ENCODE measurements at regions of chr16 and their contacts with region 1.

Region 1: DNA sequence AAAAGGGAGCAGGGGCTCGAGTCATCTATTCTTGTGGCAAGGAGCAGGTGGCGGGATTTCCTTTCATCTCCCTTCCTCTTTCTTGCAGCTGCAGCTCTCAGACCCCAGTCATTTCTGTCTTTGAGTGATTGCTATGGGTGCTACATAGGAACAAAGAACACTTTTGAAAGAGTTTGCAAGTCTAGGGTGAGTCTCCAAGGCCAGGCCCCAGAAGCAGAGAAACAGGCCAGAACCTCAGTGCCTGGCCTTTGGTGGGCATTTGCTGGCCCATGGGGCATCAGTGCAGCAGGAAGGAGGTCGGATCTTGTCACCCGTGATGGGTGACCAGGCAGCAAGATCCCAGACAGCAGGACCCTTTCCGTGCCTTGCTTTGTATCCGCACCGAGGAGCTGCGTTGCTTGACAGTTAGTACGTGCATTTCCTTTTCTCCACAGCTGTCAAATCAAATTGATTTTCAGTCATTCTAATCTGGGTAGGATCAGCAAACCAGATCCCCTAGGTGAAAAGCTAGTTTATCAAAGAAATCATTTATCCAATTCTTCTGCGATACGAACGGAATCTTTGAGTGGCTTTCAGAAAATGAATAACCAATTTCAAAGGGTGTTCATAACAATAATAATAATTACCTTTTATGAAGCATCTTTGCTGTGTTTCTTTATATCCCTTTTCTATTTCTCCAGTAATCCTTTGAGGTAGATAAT is 244.6 kb upstream of the MAF start:
- DNase-seq: no peak
- ATAC-seq: peak; percentile 10; the same call in 2 of the 3 replicates
- H3K4me3 ChIP-seq: peak overlapping the region; percentile 39
- H3K27ac ChIP-seq: peak overlapping the region; percentile 75
- H3K4me1 ChIP-seq: peaks cover 16 to 37% of the 10 kb centered on the region in 2 experiments; a peak in 4 of 5 replicates
- H3K27me3 ChIP-seq: no peaks in the 10 kb centered on the region
- CTCF ChIP-seq: no peak
- EP300 ChIP-seq: no peak
- POLR2A ChIP-seq: no peak
- RAD21 ChIP-seq: no peak; a peak in 1 of 4 replicates

Region 2: DNA sequence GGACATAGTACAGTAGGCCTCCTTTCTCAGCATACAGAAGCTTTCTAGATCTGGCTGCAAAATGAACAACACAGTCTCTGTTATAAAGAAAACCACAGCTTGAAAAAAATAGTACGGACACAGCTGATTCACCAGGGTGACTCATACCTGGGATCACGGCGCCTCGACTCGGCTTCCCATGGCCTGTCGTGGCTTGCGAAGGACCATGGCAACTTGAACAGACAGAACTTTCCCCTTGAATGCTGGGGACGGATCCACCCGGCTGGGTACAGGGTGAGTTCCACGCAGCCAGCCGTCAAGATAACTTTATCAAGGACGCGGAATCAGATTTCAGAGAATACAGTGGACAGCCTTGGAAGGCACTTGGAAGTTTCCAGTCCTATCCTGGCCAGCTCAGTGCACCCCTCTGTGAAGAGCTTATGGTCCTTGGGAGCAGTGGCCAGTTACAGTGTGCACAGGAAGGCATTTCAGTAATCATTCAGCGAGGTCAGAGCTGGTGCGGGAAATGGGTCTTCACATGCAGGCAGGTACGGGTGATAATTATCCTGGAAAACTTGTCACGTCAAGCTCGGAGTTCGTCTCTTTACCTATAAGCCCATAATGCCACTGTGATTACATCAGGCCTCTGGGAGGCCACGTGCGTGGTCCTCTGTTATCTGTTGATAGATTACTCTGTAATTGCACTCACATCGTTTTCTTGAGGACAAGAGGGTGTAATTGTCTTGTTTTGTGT is 186.7 kb before region 1 on chr16:
- CTCF ChIA-PET with region 1: no interaction called
- POLR2A ChIA-PET with region 1: no interaction called
- in situ Hi-C with region 1: no loop called
- intact Hi-C with region 1: no loop called
- DNase-seq: peak in 2 of 4 experiments; percentile 25 to 50
- ATAC-seq: peak; percentile 63
- H3K4me3 ChIP-seq: no peak overlapping the region
- H3K27ac ChIP-seq: no peak overlapping the region
- H3K4me1 ChIP-seq: peaks cover 0 to 3% of the 10 kb centered on the region in 2 experiments; a peak in 2 of 5 replicates
- H3K27me3 ChIP-seq: peaks cover 16 to 31% of the 10 kb centered on the region in 2 experiments
- CTCF ChIP-seq: no peak
- EP300 ChIP-seq: no peak
- POLR2A ChIP-seq: no peak
- RAD21 ChIP-seq: no peak

Region 3: DNA sequence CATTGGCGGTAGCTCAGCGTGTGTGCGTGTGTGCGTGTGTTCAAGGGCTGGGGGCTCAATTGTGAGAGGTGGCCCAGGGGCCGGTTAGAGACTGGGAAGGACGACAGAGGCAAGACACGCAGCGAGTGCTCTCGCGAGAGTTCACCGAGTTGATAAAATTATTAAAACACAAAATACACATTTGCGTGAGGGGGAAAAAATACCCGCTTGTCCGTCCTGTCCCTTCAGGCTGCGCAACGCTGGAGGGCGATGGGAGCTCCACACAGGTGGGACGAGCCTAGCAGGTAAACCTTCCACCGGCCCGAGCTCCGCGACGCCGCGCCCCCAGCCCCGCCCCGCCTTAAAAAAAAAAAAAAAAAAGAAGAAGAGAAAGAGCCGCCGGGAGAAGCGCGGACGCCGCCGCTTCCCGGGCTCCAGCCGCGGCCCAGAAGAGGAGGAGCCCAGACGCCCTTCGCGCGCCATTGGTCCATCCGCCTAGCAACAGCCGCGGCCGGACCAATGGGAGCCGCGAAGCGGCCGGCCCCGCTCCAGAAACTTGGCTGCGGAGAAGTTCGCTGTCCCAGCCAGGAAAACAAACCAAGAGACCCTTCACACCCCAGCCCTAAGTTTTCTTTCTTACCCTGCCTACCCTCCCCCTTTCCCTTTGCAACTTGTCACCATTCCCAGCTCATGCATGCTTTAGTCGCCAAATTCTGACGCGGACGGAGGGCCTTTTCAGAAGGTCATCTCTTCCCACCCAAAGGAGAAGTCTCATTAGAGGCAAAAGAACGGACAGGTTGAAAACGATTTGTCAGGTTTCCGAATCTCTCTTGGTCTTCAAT is 74.7 kb before region 1 on chr16:
- CTCF ChIA-PET with region 1: no interaction called
- POLR2A ChIA-PET with region 1: no interaction called
- in situ Hi-C with region 1: no loop called
- intact Hi-C with region 1: loop called (anchors 5 kb)
- DNase-seq: peak; percentile 95 to 99 (median 98)
- ATAC-seq: peak; percentile 99
- H3K4me3 ChIP-seq: peak overlapping the region; percentile 48
- H3K27ac ChIP-seq: peak overlapping the region; percentile 87
- H3K4me1 ChIP-seq: peaks cover 11 to 36% of the 10 kb centered on the region in 2 experiments
- H3K27me3 ChIP-seq: no peaks in the 10 kb centered on the region
- CTCF ChIP-seq: no peak; a peak in 1 of 6 replicates
- EP300 ChIP-seq: no peak
- POLR2A ChIP-seq: peak; percentile 72
- RAD21 ChIP-seq: no peak

Region 4: DNA sequence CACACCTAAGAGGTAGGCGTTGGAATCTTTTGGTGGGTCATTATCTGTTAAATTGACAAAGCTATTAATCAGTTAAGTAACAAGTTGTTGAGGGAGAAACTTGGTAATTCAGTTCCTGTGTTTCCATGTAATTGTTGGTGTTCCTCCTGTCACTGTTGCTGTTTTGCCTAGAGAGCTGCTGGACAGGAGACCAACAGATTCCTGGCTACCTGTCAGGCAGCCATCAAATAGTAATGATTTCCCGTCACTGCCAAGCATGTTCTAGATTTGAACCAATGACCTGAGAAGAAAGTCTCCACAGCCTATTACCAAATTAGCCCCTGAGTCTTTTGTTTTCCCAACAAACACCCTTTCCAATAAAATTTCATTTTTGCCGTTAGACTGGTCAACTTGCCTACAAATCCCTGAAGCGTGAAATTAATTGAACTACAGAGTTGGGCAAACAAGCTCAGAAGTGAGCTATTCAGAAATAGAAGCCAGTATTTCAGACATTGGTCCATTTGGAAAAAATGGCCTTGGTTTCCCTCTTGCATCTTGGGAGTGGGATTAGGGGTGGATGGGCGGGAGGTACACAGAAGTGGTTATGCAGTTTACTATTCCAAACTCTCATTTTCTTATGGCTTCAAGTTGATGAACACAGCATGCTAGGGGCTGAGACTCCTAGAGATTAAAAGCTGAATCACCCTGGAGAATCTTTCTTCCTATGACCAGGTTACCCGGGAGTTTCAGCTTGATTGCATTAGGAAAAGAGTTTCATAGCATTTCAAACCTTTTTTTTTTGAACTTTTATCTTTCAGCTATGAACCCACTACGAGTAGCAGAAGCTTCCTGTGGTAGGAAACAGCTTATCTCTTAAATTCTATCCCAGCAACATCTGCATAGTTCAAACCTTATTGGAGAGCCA is 18.2 kb after region 1 on chr16:
- CTCF ChIA-PET with region 1: no interaction called
- POLR2A ChIA-PET with region 1: interaction called, 14 read pairs
- in situ Hi-C with region 1: no loop called
- intact Hi-C with region 1: loop called (anchors 2 kb)
- DNase-seq: peak in 2 of 4 experiments; percentile 48 to 52
- ATAC-seq: peak; percentile 78
- H3K4me3 ChIP-seq: no peak overlapping the region
- H3K27ac ChIP-seq: peak overlapping the region; percentile 87
- H3K4me1 ChIP-seq: peaks cover 8 to 53% of the 10 kb centered on the region in 2 experiments; a peak in 4 of 5 replicates
- H3K27me3 ChIP-seq: no peaks in the 10 kb centered on the region
- CTCF ChIP-seq: no peak
- EP300 ChIP-seq: peak; percentile 98
- POLR2A ChIP-seq: no peak
- RAD21 ChIP-seq: peak in 1 of 2 experiments; percentile 50; a peak in 3 of 4 replicates

Region 5: DNA sequence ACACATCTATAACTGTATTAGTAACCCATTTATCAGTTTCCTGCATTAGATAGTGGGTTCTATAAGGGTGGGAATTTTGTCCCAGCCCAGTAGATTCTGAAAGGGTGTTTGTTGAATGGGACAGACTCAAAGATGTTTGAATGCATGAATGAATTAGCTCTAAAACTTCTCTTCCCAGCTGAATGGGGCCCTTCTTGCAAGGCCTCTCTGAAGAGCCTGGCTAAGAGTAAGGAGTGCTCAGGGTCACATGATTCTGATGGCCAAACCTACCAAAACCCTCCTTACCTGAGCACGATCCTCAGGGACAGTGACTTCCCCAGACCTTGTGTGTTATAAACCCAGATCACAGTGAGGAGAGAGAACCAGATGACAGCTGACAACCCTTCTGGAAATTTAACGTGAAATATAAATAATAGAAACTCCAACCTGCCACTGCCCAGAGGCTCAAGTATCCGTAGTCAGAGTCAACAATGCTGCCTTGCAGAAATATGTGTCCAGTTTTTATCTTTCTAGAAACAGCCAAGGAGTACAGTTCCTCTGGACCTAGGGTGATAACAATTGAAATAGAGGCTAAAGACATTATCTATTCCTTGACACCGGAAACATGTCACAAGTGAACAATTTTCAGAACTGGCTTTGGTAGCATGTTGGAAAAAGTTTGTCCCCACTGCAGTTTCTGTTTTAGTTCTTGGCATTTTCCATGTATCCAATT is 24.3 kb after region 1 on chr16:
- CTCF ChIA-PET with region 1: no interaction called
- POLR2A ChIA-PET with region 1: interaction called, 14 read pairs
- in situ Hi-C with region 1: no loop called
- intact Hi-C with region 1: loop called (anchors 2 kb)
- DNase-seq: peak in 2 of 4 experiments; percentile 71 to 82
- ATAC-seq: peak; percentile 89
- H3K4me3 ChIP-seq: peak overlapping the region; percentile 0; the same call in 1 of the 2 replicates
- H3K27ac ChIP-seq: peak overlapping the region; percentile 83
- H3K4me1 ChIP-seq: peaks cover 17 to 62% of the 10 kb centered on the region in 2 experiments
- H3K27me3 ChIP-seq: no peaks in the 10 kb centered on the region
- CTCF ChIP-seq: no peak
- EP300 ChIP-seq: peak; percentile 99
- POLR2A ChIP-seq: no peak
- RAD21 ChIP-seq: peak; percentile 26 to 43; a peak in 3 of 4 replicates

Region 6: GRCh38 chr16:79897453-79898146 is 52.4 kb after region 1 on chr16:
- CTCF ChIA-PET with region 1: no interaction called
- POLR2A ChIA-PET with region 1: no interaction called
- in situ Hi-C with region 1: no loop called
- intact Hi-C with region 1: no loop called
- DNase-seq: peak in 2 of 4 experiments; percentile 44 to 74
- ATAC-seq: peak; percentile 80
- H3K4me3 ChIP-seq: no peak overlapping the region
- H3K27ac ChIP-seq: peak overlapping the region; percentile 16; the same call in 1 of the 3 replicates
- H3K4me1 ChIP-seq: peaks cover 0 to 16% of the 10 kb centered on the region in 2 experiments; a peak in 4 of 5 replicates
- H3K27me3 ChIP-seq: no peaks in the 10 kb centered on the region
- CTCF ChIP-seq: no peak
- EP300 ChIP-seq: peak; percentile 68; the same call in 1 of the 2 replicates
- POLR2A ChIP-seq: no peak
- RAD21 ChIP-seq: peak; percentile 26 to 34; a peak in 2 of 4 replicates

Measured in K562 (cell line).